ENCODE measurements at regions of chr5 and their contacts with region 1.

Region 1: DNA sequence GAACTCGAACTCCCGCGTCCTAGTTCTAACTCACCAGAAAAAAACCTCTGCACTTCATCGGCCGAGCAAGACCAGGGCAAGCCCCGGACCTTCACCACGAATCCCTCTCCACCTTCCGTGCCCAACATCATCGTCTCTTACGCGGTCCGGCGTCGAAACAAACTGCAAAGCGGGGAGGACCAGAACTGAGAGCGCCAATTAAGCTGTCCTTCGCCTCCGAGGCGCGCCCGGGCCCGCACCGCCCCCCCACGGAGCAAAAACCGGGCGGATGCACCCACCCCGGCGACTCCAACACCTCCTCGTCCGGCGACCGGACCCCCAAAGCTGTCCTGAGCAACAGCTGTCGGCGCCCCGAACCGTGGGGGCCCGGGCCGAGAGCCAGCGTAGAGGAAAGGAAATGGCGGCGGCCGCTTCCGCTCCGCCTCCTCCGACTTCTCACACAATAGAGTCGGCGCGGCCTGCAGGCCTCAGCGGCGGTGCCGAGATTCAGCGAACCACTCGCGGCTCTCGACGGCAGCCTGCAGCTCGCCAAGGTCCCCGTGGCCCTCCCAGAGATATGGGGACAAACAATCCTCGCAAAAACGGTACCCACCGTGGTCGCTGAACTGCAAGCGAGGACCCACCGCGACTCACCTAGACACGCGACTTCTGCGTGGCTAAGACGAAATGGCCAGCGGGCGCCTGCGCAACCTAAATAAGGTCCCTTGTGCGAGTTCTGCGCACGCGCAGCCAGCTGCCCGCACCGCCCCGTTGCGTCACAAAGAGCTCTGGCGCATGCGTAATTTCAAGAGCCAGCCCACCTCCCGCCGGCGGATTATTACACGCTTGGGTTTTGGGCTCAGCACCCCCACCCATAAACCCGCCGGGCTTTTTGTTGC is at the start of gene HNRNPH1:
- DNase-seq: peak; percentile 99
- total RNA-seq, gene HNRNPH1: 222 TPM

Region 2: GRCh38 chr5:179559284-179560252 is 63.7 kb before region 1 on chr5:
- intact Hi-C with region 1: loop called (anchors 5 kb)
- DNase-seq: peak; percentile 99